AG04450 (cell line): ENCODE measurements at regions of chrX and their contacts with region 1.

Region 1: GRCh38 chrX:71283403-71284143 is at the start of gene NONO:
- DNase-seq: peak; percentile 96
- H3K4me3 ChIP-seq: peak within 1 kb of the TSS; percentile 74
- H3K27ac ChIP-seq: peak within 1 kb of the TSS; percentile 92
- H3K27me3 ChIP-seq: no peaks in the 10 kb centered on the region
- CTCF ChIP-seq: peak; percentile 19; the same call in 1 of the 2 replicates
- polyA plus RNA-seq, gene NONO: 279 and 437 TPM in 2 replicates

Region 2: DNA sequence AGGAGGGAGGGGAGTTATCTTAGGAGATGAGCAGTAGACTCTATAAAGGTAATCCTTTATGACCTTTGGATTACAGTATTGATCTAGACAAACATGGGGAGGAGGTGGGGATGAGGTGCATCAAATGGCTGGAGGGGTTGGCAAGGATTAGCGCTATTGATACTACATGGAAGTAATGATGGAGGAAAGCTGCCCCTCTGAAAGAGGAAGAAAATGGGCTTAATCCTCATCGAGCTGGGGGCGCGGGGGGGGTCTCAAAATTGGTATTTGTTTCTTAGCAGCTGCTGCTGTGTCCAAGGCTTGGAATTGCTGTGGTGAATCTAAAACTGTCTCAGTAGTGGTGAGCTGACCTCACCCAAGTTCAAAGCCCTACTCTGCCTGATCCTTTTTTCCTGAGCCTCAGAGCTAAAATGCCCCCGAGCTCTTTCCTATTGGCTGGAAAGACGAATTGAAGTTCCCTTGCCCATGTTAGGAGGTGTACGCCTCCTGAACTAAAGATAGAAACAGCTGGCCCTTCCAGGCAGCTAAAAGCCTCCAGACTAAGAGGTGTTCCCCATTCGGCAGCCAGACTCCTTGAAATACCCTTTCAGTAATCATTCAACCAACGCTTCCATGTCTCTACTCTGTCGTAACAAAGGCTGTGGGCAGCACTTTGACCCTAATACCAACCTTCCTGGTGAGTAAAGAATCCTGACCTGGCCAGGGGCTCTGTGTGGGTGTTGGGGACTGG is 17.8 kb after region 1 on chrX and contains the start of gene ITGB1BP2:
- CTCF ChIA-PET with region 1: interaction called, 3 read pairs
- POLR2A ChIA-PET with region 1: interaction called, 11 read pairs
- DNase-seq: no peak
- H3K4me3 ChIP-seq: no peak within 1 kb of the TSS
- H3K27ac ChIP-seq: peak within 1 kb of the TSS; percentile 65
- H3K27me3 ChIP-seq: no peaks in the 10 kb centered on the region
- CTCF ChIP-seq: no peak
- polyA plus RNA-seq, gene ITGB1BP2: 2.3 and 2.6 TPM in 2 replicates

Region 3: DNA sequence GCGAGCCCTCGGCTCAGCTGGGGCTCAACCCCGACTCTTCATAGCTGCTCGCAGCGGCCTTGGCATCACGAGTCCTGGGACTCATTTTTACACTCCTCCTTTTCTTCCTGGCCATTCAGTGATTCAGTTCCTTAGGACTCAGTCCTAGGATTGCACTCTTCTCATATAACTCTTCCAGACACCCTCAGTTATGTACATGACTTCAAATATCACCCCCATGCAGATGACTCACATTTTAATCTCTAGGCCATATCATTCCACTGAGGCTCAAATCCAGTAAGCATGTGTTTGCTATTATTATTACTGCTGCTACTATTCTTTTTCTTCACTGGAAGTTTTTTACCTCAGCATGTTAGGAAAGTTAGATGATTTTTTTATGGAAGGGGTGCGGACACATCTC is 32.3 kb after region 1 on chrX:
- CTCF ChIA-PET with region 1: no interaction called
- POLR2A ChIA-PET with region 1: interaction called, 10 read pairs
- DNase-seq: peak; percentile 37
- H3K4me3 ChIP-seq: no peak overlapping the region
- H3K27ac ChIP-seq: no peak overlapping the region
- H3K27me3 ChIP-seq: no peaks in the 10 kb centered on the region
- CTCF ChIP-seq: no peak

Region 4: DNA sequence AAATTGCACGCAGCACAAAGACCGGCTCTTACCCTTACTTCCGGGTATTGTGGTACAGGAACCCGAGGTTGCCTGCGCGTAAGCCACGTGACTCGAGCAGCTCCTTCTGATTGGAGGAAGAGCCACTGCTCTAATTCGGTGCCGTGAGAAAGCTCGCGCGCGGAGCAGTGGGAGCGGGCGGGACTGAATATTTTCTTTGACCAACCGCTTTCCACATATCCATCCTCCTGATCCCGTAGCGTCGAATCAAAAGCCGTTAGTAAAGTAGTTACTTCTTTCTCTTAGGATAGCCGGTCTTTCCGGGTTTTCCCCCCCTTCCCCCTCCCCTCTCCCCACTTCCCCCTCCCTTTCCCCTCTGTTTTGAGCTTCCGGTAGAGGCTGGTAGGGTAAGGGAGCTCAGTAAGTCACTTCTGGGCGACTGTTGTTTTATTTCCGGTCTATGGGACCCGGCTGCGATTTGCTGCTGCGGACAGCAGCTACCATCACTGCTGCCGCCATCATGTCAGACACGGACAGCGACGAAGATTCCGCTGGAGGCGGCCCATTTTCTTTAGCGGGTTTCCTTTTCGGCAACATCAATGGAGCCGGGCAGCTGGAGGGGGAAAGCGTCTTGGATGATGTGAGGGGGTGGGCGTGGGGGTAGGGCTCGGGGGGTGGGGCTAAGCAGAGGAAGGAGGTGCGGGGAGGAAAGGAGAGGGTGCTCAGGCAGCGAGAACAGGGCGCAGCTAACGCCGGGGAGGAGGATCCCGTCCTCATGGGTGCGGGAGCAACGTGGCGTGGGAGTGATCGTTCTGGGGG is 82.5 kb after region 1 on chrX and contains the start of gene TAF1:
- CTCF ChIA-PET with region 1: no interaction called
- POLR2A ChIA-PET with region 1: interaction called, 15 read pairs
- DNase-seq: peak; percentile 94
- H3K4me3 ChIP-seq: peak within 1 kb of the TSS; percentile 84
- H3K27ac ChIP-seq: peak within 1 kb of the TSS; percentile 84
- H3K27me3 ChIP-seq: no peaks in the 10 kb centered on the region
- CTCF ChIP-seq: no peak
- polyA plus RNA-seq, gene TAF1: 16.7 and 21.5 TPM in 2 replicates